Colonic mucosa (tissue), 4 donors: ENCODE measurements at regions of chr1 and their contacts with region 1.

Region 1: DNA sequence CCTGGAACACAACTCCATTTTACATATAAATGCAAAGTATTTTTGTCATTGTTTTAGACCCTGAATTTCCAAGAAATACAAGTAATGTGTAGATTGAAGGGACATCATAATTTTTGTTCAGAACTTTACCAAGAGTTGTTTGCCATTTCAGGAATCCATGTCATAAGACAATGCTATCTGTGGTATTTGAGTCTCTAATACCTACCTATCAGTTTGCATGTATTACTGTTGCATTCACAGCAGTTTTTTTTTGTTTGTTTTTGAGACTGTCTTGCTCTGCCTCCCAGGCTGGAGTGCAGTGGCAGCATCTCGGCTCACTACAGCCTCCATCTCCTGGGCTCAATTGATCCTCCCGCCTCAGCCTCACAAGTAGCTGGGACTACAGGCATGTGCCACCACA is 17.1 kb downstream of the MPZ start:
- DNase-seq: no peak
- H3K4me3 ChIP-seq: no peak overlapping the region
- H3K27ac ChIP-seq: no peak overlapping the region
- H3K4me1 ChIP-seq: no peaks in the 10 kb centered on the region
- H3K27me3 ChIP-seq: no peaks in the 10 kb centered on the region
- CTCF ChIP-seq: no peak

Region 2: GRCh38 chr1:161225534-161226319 is 66.9 kb before region 1 on chr1 and contains the start of gene TOMM40L:
- intact Hi-C with region 1: loop called (anchors 5 kb)
- DNase-seq: peak; percentile 92
- H3K4me3 ChIP-seq: peak within 1 kb of the TSS; percentile 58
- H3K27ac ChIP-seq: peak within 1 kb of the TSS; percentile 54
- H3K4me1 ChIP-seq: peaks cover 20% of the 10 kb centered on the region
- H3K27me3 ChIP-seq: no peaks in the 10 kb centered on the region
- CTCF ChIP-seq: peak; percentile 34
- total RNA-seq, gene TOMM40L: 16.6 to 23.1 TPM